PC-9 (cell line): ENCODE measurements at regions of chr7 and their contacts with region 1.

Region 1: GRCh38 chr7:23712368-23713284 is 2.6 kb downstream of the STK31 start:
- DNase-seq: peak in 1 of 2 experiments; percentile 71
- H3K4me3 ChIP-seq: no peak overlapping the region
- H3K27ac ChIP-seq: no peak overlapping the region
- H3K4me1 ChIP-seq: peaks cover 22% of the 10 kb centered on the region
- H3K27me3 ChIP-seq: no peaks in the 10 kb centered on the region
- CTCF ChIP-seq: peak; percentile 95

Region 2: DNA sequence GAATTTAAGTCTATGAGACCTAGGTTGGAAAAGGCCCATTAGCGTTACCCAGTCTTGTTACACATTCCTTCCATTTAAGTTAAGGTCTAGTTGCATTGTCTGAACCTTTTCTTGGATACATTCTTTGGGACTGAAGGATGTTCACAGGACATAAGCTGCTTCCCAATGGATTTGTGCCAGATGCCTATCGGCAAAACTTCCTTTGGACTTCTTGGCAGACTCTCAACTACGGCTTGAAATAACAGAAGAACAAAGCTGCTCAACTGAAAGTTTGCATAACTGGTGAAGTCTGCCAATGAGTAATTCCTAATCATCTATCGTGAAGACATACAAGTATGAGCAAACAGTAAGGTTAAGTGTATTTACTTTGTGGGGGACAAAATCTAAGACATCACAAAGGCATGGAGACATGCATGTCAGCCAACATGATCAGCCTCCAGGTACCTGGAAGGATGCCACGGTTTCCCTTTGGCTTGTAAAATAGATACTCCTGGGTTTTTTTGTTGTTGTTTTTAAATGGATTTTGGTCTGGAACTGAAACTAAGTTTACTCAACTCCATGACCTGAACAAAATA is 378.1 kb before region 1 on chr7:
- CTCF ChIA-PET with region 1: no interaction called
- POLR2A ChIA-PET with region 1: interaction called, 32 read pairs
- intact Hi-C with region 1: no loop called
- DNase-seq: peak; percentile 80 to 100
- H3K4me3 ChIP-seq: no peak overlapping the region
- H3K27ac ChIP-seq: peak overlapping the region; percentile 60
- H3K4me1 ChIP-seq: peaks cover 52% of the 10 kb centered on the region
- H3K27me3 ChIP-seq: no peaks in the 10 kb centered on the region
- CTCF ChIP-seq: no peak

Region 3: GRCh38 chr7:23570592-23571200 is 141.9 kb before region 1 on chr7:
- CTCF ChIA-PET with region 1: interaction called, 11 read pairs
- POLR2A ChIA-PET with region 1: no interaction called
- intact Hi-C with region 1: loop called (anchors 1 kb)
- DNase-seq: peak; percentile 77 to 81
- H3K4me3 ChIP-seq: no peak overlapping the region
- H3K27ac ChIP-seq: no peak overlapping the region
- H3K4me1 ChIP-seq: no peaks in the 10 kb centered on the region
- H3K27me3 ChIP-seq: no peaks in the 10 kb centered on the region
- CTCF ChIP-seq: peak; percentile 96

Region 4: DNA sequence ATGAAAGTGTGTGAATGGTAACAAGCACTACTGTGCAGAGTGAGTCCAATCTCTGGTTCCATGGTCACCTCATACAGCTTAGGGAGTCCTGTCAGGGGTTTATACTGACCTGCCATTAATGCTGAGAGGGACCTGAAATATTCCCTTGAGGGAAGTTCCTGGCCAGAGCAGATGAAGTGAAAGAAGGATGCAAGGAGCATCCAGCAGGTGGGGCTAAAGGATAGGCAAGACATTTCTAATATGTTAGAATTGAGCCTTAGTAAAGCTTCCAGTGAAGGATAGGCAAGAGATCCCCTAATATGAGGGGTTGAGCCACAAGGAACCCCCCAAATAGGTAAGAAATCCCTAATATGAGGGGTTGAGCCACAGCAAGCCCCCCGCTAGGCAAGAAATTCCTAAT is 58.1 kb before region 1 on chr7:
- CTCF ChIA-PET with region 1: no interaction called
- POLR2A ChIA-PET with region 1: no interaction called
- intact Hi-C with region 1: loop called (anchors 1 kb)
- DNase-seq: peak in 1 of 2 experiments; percentile 29
- H3K4me3 ChIP-seq: no peak overlapping the region
- H3K27ac ChIP-seq: no peak overlapping the region
- H3K4me1 ChIP-seq: no peaks in the 10 kb centered on the region
- H3K27me3 ChIP-seq: no peaks in the 10 kb centered on the region
- CTCF ChIP-seq: peak; percentile 66

Region 5: GRCh38 chr7:23759671-23760391 is 47.2 kb after region 1 on chr7:
- CTCF ChIA-PET with region 1: no interaction called
- POLR2A ChIA-PET with region 1: interaction called, 4 read pairs
- intact Hi-C with region 1: loop called (anchors 1 kb)
- DNase-seq: peak; percentile 53 to 98
- H3K4me3 ChIP-seq: no peak overlapping the region
- H3K27ac ChIP-seq: peak overlapping the region; percentile 35
- H3K4me1 ChIP-seq: peaks cover 26% of the 10 kb centered on the region
- H3K27me3 ChIP-seq: no peaks in the 10 kb centered on the region
- CTCF ChIP-seq: no peak

Region 6: DNA sequence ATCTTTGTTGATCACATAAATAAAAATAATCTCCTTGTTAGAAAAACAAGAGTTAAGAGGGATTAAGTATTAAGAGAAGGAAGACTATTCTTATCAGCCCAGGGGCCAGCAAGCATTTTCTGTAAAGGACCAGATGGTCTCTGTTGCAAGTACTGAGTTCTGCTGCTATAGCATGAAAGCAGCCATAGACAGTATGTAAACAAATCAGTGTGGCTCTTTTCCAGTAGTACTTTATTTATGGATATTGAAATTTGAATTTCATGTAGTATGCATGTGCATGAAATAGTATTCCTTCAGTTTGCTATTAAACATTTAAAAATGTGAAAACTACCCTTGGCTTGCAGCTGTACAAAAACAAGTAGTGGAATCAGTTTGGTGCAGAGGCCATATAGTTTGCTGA is 79.1 kb after region 1 on chr7:
- CTCF ChIA-PET with region 1: no interaction called
- POLR2A ChIA-PET with region 1: no interaction called
- intact Hi-C with region 1: no loop called
- DNase-seq: peak in 1 of 2 experiments; percentile 28
- H3K4me3 ChIP-seq: no peak overlapping the region
- H3K27ac ChIP-seq: no peak overlapping the region
- H3K4me1 ChIP-seq: no peaks in the 10 kb centered on the region
- H3K27me3 ChIP-seq: no peaks in the 10 kb centered on the region
- CTCF ChIP-seq: no peak

Region 7: GRCh38 chr7:24075426-24075810 is 362.8 kb after region 1 on chr7:
- CTCF ChIA-PET with region 1: no interaction called
- POLR2A ChIA-PET with region 1: no interaction called
- intact Hi-C with region 1: no loop called
- DNase-seq: peak in 1 of 2 experiments; percentile 82
- H3K4me3 ChIP-seq: peak overlapping the region; percentile 49; the same call in 1 of the 2 replicates
- H3K27ac ChIP-seq: peak overlapping the region; percentile 84
- H3K4me1 ChIP-seq: peaks cover 24% of the 10 kb centered on the region
- H3K27me3 ChIP-seq: no peaks in the 10 kb centered on the region
- CTCF ChIP-seq: no peak

Region 8: DNA sequence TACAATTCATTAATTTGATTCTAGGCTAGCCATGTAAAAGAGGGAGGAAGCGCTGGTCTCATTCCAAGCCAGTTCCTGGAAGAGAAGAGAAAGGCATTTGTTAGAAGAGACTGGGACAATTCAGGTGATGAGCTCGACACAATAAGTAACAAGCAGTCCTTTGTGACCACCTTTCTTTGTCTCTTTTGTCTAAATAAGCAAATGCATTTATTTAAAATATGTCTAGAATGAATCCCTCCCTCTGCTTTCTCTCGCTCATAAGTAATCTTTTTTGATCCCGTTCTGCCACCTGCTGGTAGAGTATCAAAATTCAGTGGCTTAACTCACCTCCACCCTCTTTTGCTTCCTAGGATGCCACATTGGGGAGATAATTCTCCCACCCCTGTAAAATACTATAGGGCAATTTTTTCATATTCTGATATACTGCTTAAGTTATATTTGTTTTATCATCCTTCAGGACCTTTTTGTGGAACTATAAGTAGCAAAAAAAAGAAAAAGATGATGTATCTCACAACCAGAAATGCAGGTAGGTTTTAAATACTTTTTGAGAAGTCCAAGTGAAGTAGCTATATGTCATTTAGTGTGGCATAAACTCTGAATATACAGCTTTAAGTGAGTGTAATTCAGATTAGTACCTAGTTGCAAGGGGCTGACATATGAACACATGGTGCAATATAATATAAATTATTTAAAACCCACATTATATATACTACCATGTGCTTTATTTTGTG is 953.1 kb after region 1 on chr7:
- CTCF ChIA-PET with region 1: no interaction called
- POLR2A ChIA-PET with region 1: no interaction called
- intact Hi-C with region 1: loop called (anchors 1 kb)
- DNase-seq: peak; percentile 39 to 48
- H3K4me3 ChIP-seq: no peak overlapping the region
- H3K27ac ChIP-seq: no peak overlapping the region
- H3K4me1 ChIP-seq: peaks cover 21% of the 10 kb centered on the region
- H3K27me3 ChIP-seq: no peaks in the 10 kb centered on the region
- CTCF ChIP-seq: peak; percentile 97